Endothelial cell of umbilical vein (primary cell): ENCODE measurements at regions of chr17 and their contacts with region 1.

Region 1: DNA sequence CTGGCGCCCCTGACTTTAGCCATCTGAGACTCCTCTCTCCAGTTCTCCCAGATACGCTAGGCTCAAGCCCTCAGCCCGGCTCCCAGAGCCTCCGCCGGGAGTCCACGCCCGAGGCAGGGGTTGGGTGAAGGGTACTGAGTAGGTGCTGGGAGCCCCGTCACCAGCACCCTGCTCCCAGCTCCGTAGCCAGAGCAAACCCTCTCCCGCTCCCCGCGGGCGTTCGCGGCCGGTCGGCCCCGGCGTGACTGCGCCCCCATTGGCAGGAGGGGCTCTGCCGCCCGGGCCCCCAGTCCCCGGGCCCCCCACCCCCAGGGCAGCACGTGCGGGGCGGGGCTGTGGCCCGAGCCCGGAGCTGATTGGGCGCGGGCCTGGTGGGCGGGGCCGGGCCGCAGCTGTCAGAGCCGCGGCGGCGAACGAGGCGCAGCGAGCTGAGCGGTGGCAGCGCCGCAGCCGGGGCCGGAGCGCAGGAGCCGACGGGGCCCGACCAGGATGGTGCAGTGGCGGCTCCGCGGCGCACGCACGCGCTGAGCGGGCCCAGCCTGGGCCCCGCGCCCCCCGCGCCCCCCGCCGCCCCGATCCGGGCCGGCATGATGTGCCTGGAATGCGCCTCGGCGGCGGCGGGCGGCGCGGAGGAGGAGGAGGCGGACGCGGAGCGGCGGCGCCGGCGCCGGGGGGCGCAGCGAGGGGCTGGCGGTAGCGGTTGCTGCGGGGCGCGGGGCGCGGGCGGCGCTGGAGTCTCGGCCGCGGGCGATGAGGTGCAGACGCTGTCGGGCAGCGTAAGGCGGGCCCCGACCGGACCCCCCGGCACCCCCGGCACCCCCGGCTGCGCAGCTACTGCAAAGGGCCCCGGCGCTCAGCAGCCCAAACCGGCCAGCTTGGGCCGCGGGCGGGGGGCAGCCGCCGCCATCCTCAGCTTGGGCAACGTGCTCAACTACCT is at the start of gene SPNS2:
- DNase-seq: peak; percentile 64
- H3K4me3 ChIP-seq: peak within 1 kb of the TSS; percentile 19 to 84 (median 50)
- H3K27ac ChIP-seq: peak within 1 kb of the TSS; percentile 12
- H3K4me1 ChIP-seq: peaks cover 22% of the 10 kb centered on the region
- H3K27me3 ChIP-seq: no peaks in the 10 kb centered on the region
- CTCF ChIP-seq: no peak
- POLR2A ChIP-seq: peak; percentile 52
- total RNA-seq, gene SPNS2: 56.6 and 77.3 TPM in 2 replicates

Region 2: DNA sequence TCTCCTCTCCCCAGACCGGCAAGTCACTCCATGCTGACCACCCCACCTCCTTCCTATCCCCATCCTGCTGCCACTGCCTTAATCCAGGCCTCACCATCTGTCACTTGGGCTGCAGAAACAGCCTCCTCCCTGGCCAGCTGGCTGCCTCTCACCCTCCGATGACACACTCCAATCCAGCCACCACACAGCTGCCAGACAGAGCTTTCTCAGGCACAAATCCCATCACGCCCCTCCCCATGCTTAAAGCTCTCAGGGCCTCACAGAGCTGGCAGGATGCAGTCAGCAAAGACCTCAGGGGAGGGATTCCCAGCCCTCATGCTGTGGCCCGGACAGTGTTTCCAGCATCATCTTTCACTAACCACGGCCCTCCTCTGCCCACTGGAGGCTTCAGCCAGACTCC is 619.5 kb before region 1 on chr17:
- CTCF ChIA-PET with region 1: no interaction called
- POLR2A ChIA-PET with region 1: no interaction called
- dilution Hi-C with region 1: no loop called
- intact Hi-C with region 1: no loop called
- DNase-seq: no peak
- H3K4me3 ChIP-seq: no peak overlapping the region
- H3K27ac ChIP-seq: no peak overlapping the region
- H3K4me1 ChIP-seq: no peaks in the 10 kb centered on the region
- H3K27me3 ChIP-seq: no peaks in the 10 kb centered on the region
- CTCF ChIP-seq: no peak
- POLR2A ChIP-seq: no peak

Region 3: GRCh38 chr17:4433515-4434031 is 65.2 kb before region 1 on chr17 and contains the start of gene SPNS3:
- CTCF ChIA-PET with region 1: no interaction called
- POLR2A ChIA-PET with region 1: no interaction called
- dilution Hi-C with region 1: no loop called
- intact Hi-C with region 1: loop called (anchors 2 kb)
- DNase-seq: no peak
- H3K4me3 ChIP-seq: no peak within 1 kb of the TSS
- H3K27ac ChIP-seq: no peak within 1 kb of the TSS
- H3K4me1 ChIP-seq: peaks cover 18% of the 10 kb centered on the region
- H3K27me3 ChIP-seq: no peaks in the 10 kb centered on the region
- CTCF ChIP-seq: no peak
- POLR2A ChIP-seq: no peak
- total RNA-seq, gene SPNS3: 0.66 TPM in 1 of 2 replicates, not detected in the other

Region 4: DNA sequence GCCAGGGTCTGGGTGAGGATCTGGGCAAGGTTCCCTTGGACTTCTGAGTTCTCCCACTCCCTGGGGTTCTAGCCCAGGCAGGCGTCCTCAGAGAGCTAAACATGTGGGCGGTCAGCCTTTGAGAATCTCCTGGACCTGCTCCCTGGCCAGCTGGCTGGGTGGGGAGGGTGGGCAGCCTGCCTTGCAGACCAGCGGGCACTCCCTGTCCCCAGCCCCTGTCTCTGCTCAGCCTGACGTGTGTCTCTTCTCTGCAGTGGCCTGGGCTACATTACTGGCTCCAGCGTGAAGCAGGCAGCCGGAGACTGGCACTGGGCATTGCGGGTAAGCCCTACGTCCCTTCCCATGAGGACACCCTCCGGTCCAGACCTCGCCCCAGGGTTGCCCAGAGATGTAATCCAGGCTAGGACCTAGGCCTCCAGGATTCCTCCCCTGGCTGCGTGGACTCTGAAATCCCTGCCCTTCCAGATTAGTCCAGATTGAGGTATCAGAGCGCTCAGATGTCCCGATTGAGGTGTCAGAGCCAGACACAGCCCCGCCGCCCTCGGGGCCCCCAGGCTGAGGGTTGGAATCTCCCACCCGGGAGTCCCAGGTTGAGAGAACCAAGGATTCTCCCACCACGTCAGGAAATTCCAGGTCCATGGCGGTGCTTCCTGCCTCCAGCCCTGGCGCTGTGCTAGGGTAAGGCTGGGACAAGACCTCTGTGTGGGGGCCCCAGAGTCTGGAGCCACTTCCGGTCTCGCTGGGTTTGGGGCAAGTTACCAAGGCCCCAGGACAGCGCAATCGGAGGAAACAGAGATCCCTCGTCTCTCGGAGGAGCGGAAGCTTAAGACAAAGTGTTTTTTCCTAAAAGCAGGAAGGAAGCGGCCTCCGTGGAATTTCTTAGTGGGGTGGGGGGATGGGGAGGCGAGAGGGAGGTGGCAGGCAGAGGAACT is 32.3 kb after region 1 on chr17:
- CTCF ChIA-PET with region 1: interaction called, 3 read pairs
- POLR2A ChIA-PET with region 1: interaction called, 3 read pairs
- dilution Hi-C with region 1: no loop called
- intact Hi-C with region 1: loop called (anchors 1 kb)
- DNase-seq: peak; percentile 97
- H3K4me3 ChIP-seq: no peak overlapping the region
- H3K27ac ChIP-seq: peak overlapping the region; percentile 89
- H3K4me1 ChIP-seq: peaks cover 57% of the 10 kb centered on the region
- H3K27me3 ChIP-seq: no peaks in the 10 kb centered on the region
- CTCF ChIP-seq: no peak
- POLR2A ChIP-seq: peak; percentile 63

Region 5: GRCh38 chr17:4540224-4540641 is 41.5 kb after region 1 on chr17:
- CTCF ChIA-PET with region 1: interaction called, 31 read pairs
- POLR2A ChIA-PET with region 1: interaction called, 8 read pairs
- dilution Hi-C with region 1: no loop called
- intact Hi-C with region 1: no loop called
- DNase-seq: no peak
- H3K4me3 ChIP-seq: no peak overlapping the region
- H3K27ac ChIP-seq: no peak overlapping the region
- H3K4me1 ChIP-seq: peaks cover 43% of the 10 kb centered on the region
- H3K27me3 ChIP-seq: no peaks in the 10 kb centered on the region
- CTCF ChIP-seq: peak; percentile 48 to 72
- POLR2A ChIP-seq: no peak